GM10248 (cell line): ENCODE measurements at regions of chr6 and their contacts with region 1.

Region 1: DNA sequence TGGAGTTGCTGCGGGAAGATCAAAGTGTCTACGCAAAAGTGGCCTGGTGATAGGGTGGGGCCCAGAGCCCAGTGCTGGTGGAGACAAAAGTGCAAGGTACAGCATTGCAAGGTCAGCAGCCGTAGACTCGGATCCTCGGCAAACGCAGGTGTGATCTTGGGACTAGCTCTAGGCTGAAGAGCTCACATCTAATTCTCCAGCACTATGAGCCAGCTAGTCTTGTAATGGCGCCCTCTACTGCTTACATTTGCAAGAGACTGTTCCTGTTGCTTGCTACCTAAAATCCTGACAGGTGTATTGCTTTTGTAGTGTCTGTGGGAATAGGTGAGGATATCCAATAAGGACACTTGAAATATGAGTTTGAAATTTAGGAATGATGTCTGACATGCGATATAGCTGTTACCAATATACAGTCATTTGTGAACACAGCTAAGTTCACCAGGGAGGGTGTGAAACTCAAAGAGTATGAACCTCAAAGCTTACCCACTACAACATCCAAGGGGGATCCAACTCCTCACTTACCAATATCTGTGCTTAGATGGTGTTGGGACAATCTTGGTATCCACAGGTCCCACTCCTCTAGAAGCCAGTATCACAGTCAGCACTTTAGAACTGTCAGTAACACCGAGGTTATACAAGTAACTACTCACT is 58.4 kb downstream of the PDE7B start:
- DNase-seq: peak; percentile 65
- CTCF ChIP-seq: peak; percentile 68

Region 2: GRCh38 chr6:135883045-135883444 is 26.8 kb before region 1 on chr6:
- CTCF ChIA-PET with region 1: interaction called, 10 read pairs
- POLR2A ChIA-PET with region 1: no interaction called
- DNase-seq: no peak
- CTCF ChIP-seq: no peak

Region 3: GRCh38 chr6:135895231-135895911 is 14.5 kb before region 1 on chr6:
- CTCF ChIA-PET with region 1: interaction called, 18 read pairs
- POLR2A ChIA-PET with region 1: no interaction called
- DNase-seq: no peak
- CTCF ChIP-seq: no peak

Region 4: GRCh38 chr6:135922174-135922573 is 12.3 kb after region 1 on chr6:
- CTCF ChIA-PET with region 1: interaction called, 20 read pairs
- POLR2A ChIA-PET with region 1: no interaction called
- DNase-seq: no peak
- CTCF ChIP-seq: no peak

Region 5: DNA sequence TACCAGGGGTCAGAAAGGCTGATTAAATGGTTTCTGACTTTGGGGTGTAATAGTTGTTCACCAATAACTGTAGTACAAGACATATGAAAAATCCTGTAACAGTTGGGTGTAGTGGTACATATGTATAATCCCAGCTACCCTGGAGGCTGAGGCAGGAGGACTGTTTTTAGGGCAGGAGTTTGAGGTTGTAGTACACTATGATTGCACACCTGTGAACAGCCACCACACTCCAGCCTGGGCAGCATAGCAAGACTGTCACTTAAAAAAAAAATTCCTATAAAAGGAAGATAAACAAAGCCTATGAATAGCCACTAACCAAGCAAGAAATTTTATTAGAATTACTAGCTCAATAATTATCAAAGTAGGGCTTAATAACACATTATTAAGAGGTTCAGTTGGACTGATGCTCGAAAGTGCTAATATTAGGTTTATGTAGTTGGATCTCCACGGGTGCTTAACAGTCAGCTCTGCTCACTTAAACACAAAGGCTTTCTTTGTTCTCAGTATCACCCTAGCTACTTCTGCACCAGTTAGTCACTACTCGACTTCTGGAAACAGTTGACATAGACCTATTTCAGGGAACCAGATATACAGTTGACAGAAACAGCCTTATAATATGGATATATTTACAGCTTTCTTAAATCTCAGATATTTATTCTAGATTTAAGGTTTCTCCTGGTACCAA is 227.3 kb after region 1 on chr6:
- CTCF ChIA-PET with region 1: no interaction called
- POLR2A ChIA-PET with region 1: no interaction called
- DNase-seq: no peak
- CTCF ChIP-seq: no peak